ENCODE measurements at regions of chr1 and their contacts with region 1.

Region 1: DNA sequence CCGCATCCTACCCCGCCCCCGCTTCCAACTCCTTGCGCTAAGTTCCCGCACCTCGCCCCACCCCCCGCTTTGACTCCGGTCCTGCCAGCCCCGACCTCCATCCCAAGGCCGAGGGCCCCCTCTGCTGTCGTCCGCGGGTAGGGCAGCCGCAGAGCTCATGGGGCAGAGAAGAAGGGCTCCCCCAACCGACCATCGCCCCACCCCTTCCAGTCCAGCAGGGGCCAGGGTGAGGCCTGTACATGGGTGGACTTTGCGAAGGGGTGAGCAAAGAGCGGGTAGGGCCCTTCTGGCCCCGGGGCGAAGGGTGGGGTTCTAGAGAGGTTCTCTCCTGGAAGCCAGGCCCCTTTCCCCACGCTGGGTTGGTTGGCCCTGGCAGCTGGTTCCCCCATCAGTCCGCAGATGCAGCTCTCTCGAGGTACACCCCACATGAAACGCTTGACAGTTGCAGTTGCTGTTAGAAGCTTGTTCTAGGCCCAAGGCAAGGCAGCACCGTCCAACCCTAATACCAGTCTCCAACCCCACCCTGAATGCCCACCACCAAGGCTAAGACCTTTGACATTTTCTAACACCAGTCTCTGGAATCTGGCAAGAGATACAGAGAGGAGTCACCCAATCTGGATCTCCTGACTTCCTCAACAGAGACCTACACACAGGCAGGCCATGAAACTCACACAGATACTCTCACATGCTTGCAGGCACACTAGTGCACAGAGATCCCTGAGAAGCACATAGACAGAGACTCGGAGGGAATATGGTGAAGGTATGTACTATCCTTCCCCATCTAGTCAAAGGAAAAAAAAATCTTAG is 25.3 kb upstream of the ADGRB2 start:
- DNase-seq: peak; percentile 100
- ATAC-seq: peak; percentile 82
- H3K4me3 Mint-ChIP-seq: peak overlapping the region; percentile 83
- H3K27ac Mint-ChIP-seq: no peak overlapping the region
- H3K4me1 Mint-ChIP-seq: peaks cover 11% of the 10 kb centered on the region
- H3K27me3 Mint-ChIP-seq: no peaks in the 10 kb centered on the region
- CTCF ChIP-seq: peak; percentile 70

Region 2: GRCh38 chr1:31564134-31564989 is 225.1 kb before region 1 on chr1:
- CTCF ChIA-PET with region 1: interaction called, 17 read pairs
- POLR2A ChIA-PET with region 1: no interaction called
- DNase-seq: peak; percentile 75
- ATAC-seq: peak; percentile 81
- H3K4me3 Mint-ChIP-seq: no peak overlapping the region
- H3K27ac Mint-ChIP-seq: no peak overlapping the region
- H3K4me1 Mint-ChIP-seq: peaks cover 19% of the 10 kb centered on the region
- H3K27me3 Mint-ChIP-seq: no peaks in the 10 kb centered on the region; the same call in 1 of the 2 replicates
- CTCF ChIP-seq: peak; percentile 64

Region 3: GRCh38 chr1:31663622-31664452 is 125.6 kb before region 1 on chr1:
- CTCF ChIA-PET with region 1: interaction called, 90 read pairs
- POLR2A ChIA-PET with region 1: no interaction called
- DNase-seq: peak; percentile 89
- ATAC-seq: peak; percentile 83
- H3K4me3 Mint-ChIP-seq: no peak overlapping the region
- H3K27ac Mint-ChIP-seq: no peak overlapping the region
- H3K4me1 Mint-ChIP-seq: peaks cover 3% of the 10 kb centered on the region
- H3K27me3 Mint-ChIP-seq: no peaks in the 10 kb centered on the region
- CTCF ChIP-seq: peak; percentile 91

Region 4: GRCh38 chr1:31705080-31705866 is 84.2 kb before region 1 on chr1:
- CTCF ChIA-PET with region 1: interaction called, 180 read pairs
- POLR2A ChIA-PET with region 1: no interaction called
- DNase-seq: peak; percentile 75
- ATAC-seq: peak; percentile 40
- H3K4me3 Mint-ChIP-seq: peak overlapping the region; percentile 76
- H3K27ac Mint-ChIP-seq: peak overlapping the region; percentile 91
- H3K4me1 Mint-ChIP-seq: peaks cover 42% of the 10 kb centered on the region
- H3K27me3 Mint-ChIP-seq: peaks cover 6% of the 10 kb centered on the region
- CTCF ChIP-seq: no peak

Region 5: GRCh38 chr1:31745096-31745945 is 44.1 kb before region 1 on chr1:
- CTCF ChIA-PET with region 1: interaction called, 64 read pairs
- POLR2A ChIA-PET with region 1: interaction called, 4 read pairs
- DNase-seq: peak; percentile 82
- ATAC-seq: peak; percentile 82
- H3K4me3 Mint-ChIP-seq: no peak overlapping the region
- H3K27ac Mint-ChIP-seq: no peak overlapping the region
- H3K4me1 Mint-ChIP-seq: peaks cover 37% of the 10 kb centered on the region
- H3K27me3 Mint-ChIP-seq: no peaks in the 10 kb centered on the region; the same call in 1 of the 2 replicates
- CTCF ChIP-seq: peak; percentile 71

Region 6: GRCh38 chr1:31815752-31816500 is 26.5 kb after region 1 on chr1 and contains the start of gene SPOCD1:
- CTCF ChIA-PET with region 1: interaction called, 18 read pairs
- POLR2A ChIA-PET with region 1: no interaction called
- DNase-seq: peak; percentile 99
- ATAC-seq: peak; percentile 95
- H3K4me3 Mint-ChIP-seq: peak within 1 kb of the TSS; percentile 86
- H3K27ac Mint-ChIP-seq: 0 out of 2 replicates have a peak within 1 kb of the TSS, but pooled peaks have one; percentile 64
- H3K4me1 Mint-ChIP-seq: peaks cover 4% of the 10 kb centered on the region; the same call in 1 of the 2 replicates
- H3K27me3 Mint-ChIP-seq: peaks cover 5% of the 10 kb centered on the region
- CTCF ChIP-seq: peak; percentile 94
- total RNA-seq, gene SPOCD1: 3.0 to 4.9 TPM (median 3.7 TPM) in 3 replicates

Region 7: GRCh38 chr1:31931593-31932225 is 142.2 kb after region 1 on chr1:
- CTCF ChIA-PET with region 1: no interaction called
- POLR2A ChIA-PET with region 1: no interaction called
- DNase-seq: no peak
- ATAC-seq: no peak
- H3K4me3 Mint-ChIP-seq: peak overlapping the region; percentile 33
- H3K27ac Mint-ChIP-seq: peak overlapping the region; percentile 77
- H3K4me1 Mint-ChIP-seq: peaks cover 76% of the 10 kb centered on the region
- H3K27me3 Mint-ChIP-seq: no peaks in the 10 kb centered on the region
- CTCF ChIP-seq: no peak

Region 8: GRCh38 chr1:32020339-32020738 is 230.9 kb after region 1 on chr1:
- CTCF ChIA-PET with region 1: no interaction called
- POLR2A ChIA-PET with region 1: no interaction called
- DNase-seq: no peak
- ATAC-seq: no peak
- H3K4me3 Mint-ChIP-seq: no peak overlapping the region
- H3K27ac Mint-ChIP-seq: 0 out of 2 replicates have a peak overlapping the region, but pooled peaks have one; percentile 7
- H3K4me1 Mint-ChIP-seq: peaks cover 15% of the 10 kb centered on the region
- H3K27me3 Mint-ChIP-seq: no peaks in the 10 kb centered on the region
- CTCF ChIP-seq: no peak

Region 9: DNA sequence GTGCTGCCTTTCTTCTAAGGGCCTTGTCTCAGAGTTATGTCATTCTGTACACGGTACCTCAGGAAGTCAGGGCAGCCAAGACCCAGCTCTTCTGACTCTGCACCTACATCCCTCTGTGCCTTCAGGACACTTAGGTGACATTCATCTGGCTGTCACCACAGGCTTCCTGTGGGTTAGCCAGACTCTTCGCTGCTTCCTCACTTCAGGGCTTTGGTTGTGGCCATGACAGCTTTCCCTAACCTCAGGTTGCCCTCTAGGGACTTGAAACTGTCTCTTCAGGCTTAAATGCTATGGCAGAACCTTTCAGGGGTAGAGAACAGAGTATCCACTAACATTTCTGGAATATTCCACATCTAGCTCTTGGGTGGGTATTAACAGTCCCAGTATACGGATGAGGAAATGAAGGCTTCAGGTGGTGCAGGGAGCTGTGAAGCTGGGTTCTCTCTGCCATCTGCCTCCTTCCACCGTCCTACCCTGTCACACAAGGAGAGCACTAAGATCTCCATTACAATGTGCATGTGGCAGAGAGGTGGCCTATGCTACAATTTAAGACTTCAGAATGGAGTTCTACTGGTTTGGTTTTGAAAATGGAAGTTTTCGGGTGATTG is 582.8 kb after region 1 on chr1:
- CTCF ChIA-PET with region 1: no interaction called
- POLR2A ChIA-PET with region 1: no interaction called
- DNase-seq: no peak
- ATAC-seq: no peak
- H3K4me3 Mint-ChIP-seq: no peak overlapping the region
- H3K27ac Mint-ChIP-seq: no peak overlapping the region
- H3K4me1 Mint-ChIP-seq: no peaks in the 10 kb centered on the region
- H3K27me3 Mint-ChIP-seq: no peaks in the 10 kb centered on the region
- CTCF ChIP-seq: no peak